ENCODE measurements at regions of chr6 and their contacts with region 1.

Region 1: DNA sequence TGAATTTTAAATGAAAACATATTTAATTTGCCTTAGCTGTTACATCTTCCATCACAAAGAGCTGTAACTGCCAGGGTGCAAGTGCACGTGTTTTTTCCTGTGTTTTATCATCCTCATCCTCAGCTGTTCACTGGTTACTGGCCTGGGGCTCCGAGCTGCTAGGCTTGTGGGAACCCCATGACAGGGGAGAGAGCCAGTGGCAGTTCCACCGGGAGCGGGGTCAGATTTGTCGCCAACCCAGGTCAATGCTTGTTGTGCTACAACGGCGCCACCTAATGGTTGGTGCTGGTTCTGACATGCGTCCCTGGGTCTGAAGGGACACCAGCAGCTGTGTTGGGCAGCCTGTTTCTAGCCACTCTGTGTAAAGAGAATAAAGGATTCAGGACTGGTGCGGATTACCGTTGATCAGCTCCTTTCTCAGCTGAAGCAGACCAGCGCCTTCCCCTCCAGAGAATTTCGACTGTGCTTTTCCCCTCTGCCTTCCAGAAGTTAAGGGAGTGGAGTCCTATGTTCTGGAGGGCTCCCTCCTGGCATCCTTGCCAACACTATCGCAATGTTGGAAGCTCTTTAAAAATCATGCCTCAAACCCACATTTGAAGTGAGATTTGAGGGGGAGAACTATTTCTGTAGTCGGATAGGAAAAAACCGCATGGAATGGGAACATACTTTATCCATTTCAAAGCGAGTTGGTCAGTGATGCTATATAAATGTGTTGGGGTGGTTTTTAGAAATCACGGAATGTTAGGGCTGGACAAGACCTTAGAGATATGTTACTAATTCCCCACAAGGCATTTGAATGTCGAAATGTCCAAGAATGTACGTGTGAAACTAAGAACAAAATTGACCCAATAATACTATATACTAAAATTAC is 32.1 kb downstream of the SUMO4 start:
- DNase-seq: peak; percentile 87 to 89
- ATAC-seq: peak; percentile 89 to 97 (median 93)
- H3K4me3 ChIP-seq: no peak overlapping the region
- H3K27ac ChIP-seq: no peak overlapping the region
- H3K4me1 ChIP-seq: peaks cover 0 to 7% (median 0%) of the 10 kb centered on the region in 9 donors
- H3K27me3 ChIP-seq: peaks cover 0 to 22% (median 0%) of the 10 kb centered on the region in 7 donors
- CTCF ChIP-seq: peak; percentile 78 to 97 (median 95)

Region 2: GRCh38 chr6:149028767-149029405 is 403.3 kb before region 1 on chr6:
- intact Hi-C with region 1: loop called (anchors 1 to 5 kb)
- DNase-seq: peak in 1 of 2 donors; percentile 84
- ATAC-seq: peak; percentile 57 to 80 (median 76)
- H3K4me3 ChIP-seq: no peak overlapping the region
- H3K27ac ChIP-seq: no peak overlapping the region
- H3K4me1 ChIP-seq: peaks cover 0 to 21% (median 0%) of the 10 kb centered on the region in 9 donors
- H3K27me3 ChIP-seq: no peaks in the 10 kb centered on the region
- CTCF ChIP-seq: peak; percentile 66 to 87 (median 80)

Region 3: DNA sequence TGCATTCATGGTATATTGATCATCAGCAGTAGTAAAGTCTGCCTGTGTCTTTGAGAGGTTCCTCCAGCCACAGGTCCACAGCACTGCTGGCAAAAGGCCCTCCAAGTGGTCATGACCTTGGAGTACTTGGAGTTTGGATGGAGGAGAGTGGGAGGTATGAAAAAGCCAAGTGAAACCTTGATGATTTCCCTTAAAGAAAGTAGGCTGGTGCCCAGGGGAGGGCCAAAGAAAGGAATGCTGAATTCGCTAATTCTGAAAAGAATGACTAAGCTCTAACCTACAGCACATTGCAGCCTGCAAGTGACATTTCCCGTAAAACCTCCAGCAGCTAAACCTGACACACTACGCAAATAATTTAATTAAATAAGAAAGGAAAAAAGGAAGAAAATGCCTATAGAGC is 338.0 kb before region 1 on chr6:
- intact Hi-C with region 1: loop called in 1 of 10 experiments (anchors 5 kb)
- DNase-seq: no peak
- ATAC-seq: no peak
- H3K4me3 ChIP-seq: no peak overlapping the region
- H3K27ac ChIP-seq: no peak overlapping the region
- H3K4me1 ChIP-seq: peaks cover 0 to 23% (median 0%) of the 10 kb centered on the region in 9 donors
- H3K27me3 ChIP-seq: peaks cover 0 to 18% (median 0%) of the 10 kb centered on the region in 7 donors
- CTCF ChIP-seq: no peak